K562 (cell line): ENCODE measurements at regions of chr11 and their contacts with region 1.

Region 1: DNA sequence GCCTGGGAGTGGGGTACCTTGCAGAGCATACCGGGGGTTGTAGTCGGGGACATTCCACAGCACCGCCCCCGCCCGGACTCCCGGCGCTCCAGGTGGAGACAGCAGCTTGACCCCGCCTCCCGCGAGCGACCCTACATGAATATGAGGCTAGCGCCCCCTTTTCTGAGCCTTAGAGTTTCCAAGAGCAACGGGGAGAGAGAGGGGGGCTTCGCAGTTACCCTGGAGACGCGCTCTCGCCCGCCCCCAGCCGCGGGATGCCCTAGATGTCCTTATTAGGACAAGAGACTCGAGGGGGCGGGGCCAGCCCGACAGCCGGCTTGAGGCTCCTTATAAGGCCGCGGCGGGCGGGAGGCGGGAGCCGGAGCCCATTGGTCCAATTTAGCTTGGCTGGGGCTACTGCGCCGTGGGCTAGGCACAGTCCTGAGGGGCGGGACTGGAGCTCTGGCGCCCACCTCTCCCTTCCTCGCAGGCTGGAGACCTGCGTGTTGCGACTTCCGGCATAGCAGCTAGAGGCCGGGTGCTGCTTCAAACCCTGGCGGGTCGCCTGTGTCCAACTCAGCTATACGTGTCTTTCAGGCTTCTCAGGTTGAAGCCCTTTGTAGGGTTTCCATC is 927 bp upstream of the MUS81 start:
- DNase-seq: peak; percentile 82 to 100 (median 89)
- ATAC-seq: peak; percentile 80
- H3K4me3 ChIP-seq: peak overlapping the region; percentile 95
- H3K27ac ChIP-seq: peak overlapping the region; percentile 96
- H3K4me1 ChIP-seq: peaks cover 14 to 73% of the 10 kb centered on the region in 2 experiments
- H3K27me3 ChIP-seq: no peaks in the 10 kb centered on the region; a peak in 1 of 5 replicates
- CTCF ChIP-seq: peak; percentile 12 to 31 (median 19); a peak in 3 of 6 replicates
- EP300 ChIP-seq: 0 out of 2 replicates have a peak, but pooled peaks have one; percentile 10
- POLR2A ChIP-seq: peak; percentile 98
- RAD21 ChIP-seq: no peak

Region 2: DNA sequence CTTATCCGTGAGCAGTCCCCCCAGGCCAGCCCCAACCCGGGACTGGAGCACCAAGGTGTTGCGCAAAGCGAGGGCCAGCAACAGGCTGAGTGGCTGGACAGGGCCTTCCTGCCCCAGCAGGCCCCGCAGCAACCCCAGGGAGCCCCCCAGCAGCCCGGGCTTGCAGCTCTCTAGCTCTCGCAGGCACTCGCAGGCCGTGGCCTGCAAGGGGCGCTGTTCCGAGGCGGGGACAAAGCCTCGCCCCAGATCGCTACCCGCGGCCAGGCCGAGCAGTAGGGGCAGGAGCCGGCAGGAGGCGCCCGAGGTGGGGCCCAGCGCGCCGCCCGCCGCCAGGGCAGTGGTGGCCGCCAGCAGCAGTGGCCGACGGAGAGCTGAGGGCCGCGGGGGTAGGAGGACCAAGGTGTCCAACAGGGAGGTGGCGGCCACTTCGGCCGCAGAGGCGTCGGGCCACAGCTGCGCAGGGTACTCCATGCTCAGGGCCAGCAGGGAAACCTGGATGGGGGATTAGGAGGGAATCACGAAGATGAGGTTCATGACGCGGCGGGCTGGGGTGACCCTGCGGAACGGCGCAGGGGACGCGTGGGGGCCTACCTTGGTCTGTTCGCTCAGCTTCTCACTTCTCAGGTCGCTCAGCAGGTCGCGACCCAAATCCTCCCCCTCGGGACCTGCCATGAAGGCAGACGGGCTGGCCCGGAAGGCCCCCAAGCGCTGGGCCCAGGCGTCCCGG is 79.3 kb before region 1 on chr11:
- CTCF ChIA-PET with region 1: no interaction called
- POLR2A ChIA-PET with region 1: interaction called, 18 read pairs
- in situ Hi-C with region 1: no loop called
- intact Hi-C with region 1: no loop called
- DNase-seq: peak; percentile 84 to 92 (median 87)
- ATAC-seq: peak; percentile 92
- H3K4me3 ChIP-seq: peak overlapping the region; percentile 86
- H3K27ac ChIP-seq: peak overlapping the region; percentile 95
- H3K4me1 ChIP-seq: peaks cover 7 to 48% of the 10 kb centered on the region in 2 experiments; a peak in 4 of 5 replicates
- H3K27me3 ChIP-seq: no peaks in the 10 kb centered on the region
- CTCF ChIP-seq: peak; percentile 96 to 100 (median 99)
- EP300 ChIP-seq: no peak
- POLR2A ChIP-seq: peak; percentile 85
- RAD21 ChIP-seq: peak; percentile 86 to 90

Region 3: GRCh38 chr11:65796726-65797601 is 62.3 kb before region 1 on chr11:
- CTCF ChIA-PET with region 1: no interaction called
- POLR2A ChIA-PET with region 1: no interaction called
- in situ Hi-C with region 1: no loop called
- intact Hi-C with region 1: no loop called
- DNase-seq: no peak
- ATAC-seq: peak; percentile 47; the same call in 2 of the 3 replicates
- H3K4me3 ChIP-seq: no peak overlapping the region
- H3K27ac ChIP-seq: no peak overlapping the region
- H3K4me1 ChIP-seq: peaks cover 0 to 36% of the 10 kb centered on the region in 2 experiments; a peak in 1 of 5 replicates
- H3K27me3 ChIP-seq: peaks cover 77 to 92% of the 10 kb centered on the region in 2 experiments
- CTCF ChIP-seq: no peak
- EP300 ChIP-seq: no peak
- POLR2A ChIP-seq: no peak
- RAD21 ChIP-seq: no peak

Region 4: GRCh38 chr11:65833297-65834030 is 25.8 kb before region 1 on chr11 and contains the start of gene SNX32:
- CTCF ChIA-PET with region 1: no interaction called
- POLR2A ChIA-PET with region 1: interaction called, 12 read pairs
- in situ Hi-C with region 1: no loop called
- intact Hi-C with region 1: no loop called
- DNase-seq: peak; percentile 83 to 96 (median 94)
- ATAC-seq: peak; percentile 100
- H3K4me3 ChIP-seq: no peak within 1 kb of the TSS
- H3K27ac ChIP-seq: no peak within 1 kb of the TSS
- H3K4me1 ChIP-seq: peaks cover 0 to 16% of the 10 kb centered on the region in 2 experiments; a peak in 2 of 5 replicates
- H3K27me3 ChIP-seq: peaks cover 4 to 24% of the 10 kb centered on the region in 2 experiments; a peak in 4 of 5 replicates
- CTCF ChIP-seq: no peak
- EP300 ChIP-seq: no peak
- POLR2A ChIP-seq: no peak
- RAD21 ChIP-seq: no peak
- polyA plus RNA-seq, gene SNX32: 0.03 TPM

Region 5: DNA sequence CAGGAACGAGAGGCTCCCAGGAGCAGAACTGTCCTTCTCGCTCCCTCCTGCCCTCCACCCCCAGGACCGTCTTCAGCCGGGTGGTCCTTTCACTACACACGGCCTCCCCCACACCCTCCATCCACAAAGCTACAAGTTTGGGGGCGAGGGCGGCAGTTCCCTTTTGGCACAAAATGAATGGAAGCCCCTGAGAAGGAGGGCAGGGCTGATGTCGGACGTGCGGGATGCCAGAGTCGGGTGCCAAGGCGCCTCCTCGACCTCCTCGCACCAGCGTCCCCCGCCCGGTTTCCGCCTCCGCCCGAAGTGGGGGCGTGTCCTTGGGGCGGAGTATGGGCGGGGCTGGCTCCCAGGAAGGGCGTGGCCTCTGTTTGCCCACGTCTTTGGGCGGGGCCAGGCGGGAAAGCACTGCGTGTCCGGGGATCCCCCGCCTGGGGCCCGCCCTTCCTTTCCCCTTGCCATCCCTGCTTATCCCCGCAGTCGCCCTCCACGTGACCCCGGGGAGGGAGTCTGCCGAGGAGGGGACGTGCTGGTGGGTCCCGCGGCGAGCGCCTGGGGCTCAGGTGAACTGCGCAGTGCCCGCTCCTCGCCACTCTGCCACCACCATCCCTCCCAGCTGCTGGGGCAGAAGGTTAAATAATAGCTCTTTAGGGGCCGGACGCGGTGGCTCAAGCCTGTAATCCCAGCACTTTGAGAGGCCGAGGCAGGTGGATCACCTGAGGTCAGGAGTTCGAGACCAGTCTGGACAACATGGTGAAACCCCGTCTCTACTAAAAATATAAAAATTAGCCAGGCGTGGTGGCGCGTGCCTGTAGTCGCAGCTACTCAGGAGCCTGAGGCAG is 14.2 kb after region 1 on chr11:
- CTCF ChIA-PET with region 1: no interaction called
- POLR2A ChIA-PET with region 1: interaction called, 151 read pairs
- in situ Hi-C with region 1: no loop called
- intact Hi-C with region 1: no loop called
- DNase-seq: peak; percentile 92 to 98 (median 97)
- ATAC-seq: peak; percentile 86
- H3K4me3 ChIP-seq: peak overlapping the region; percentile 46
- H3K27ac ChIP-seq: peak overlapping the region; percentile 73
- H3K4me1 ChIP-seq: peaks cover 11 to 42% of the 10 kb centered on the region in 2 experiments
- H3K27me3 ChIP-seq: no peaks in the 10 kb centered on the region
- CTCF ChIP-seq: no peak
- EP300 ChIP-seq: no peak
- POLR2A ChIP-seq: peak; percentile 79
- RAD21 ChIP-seq: no peak

Region 6: DNA sequence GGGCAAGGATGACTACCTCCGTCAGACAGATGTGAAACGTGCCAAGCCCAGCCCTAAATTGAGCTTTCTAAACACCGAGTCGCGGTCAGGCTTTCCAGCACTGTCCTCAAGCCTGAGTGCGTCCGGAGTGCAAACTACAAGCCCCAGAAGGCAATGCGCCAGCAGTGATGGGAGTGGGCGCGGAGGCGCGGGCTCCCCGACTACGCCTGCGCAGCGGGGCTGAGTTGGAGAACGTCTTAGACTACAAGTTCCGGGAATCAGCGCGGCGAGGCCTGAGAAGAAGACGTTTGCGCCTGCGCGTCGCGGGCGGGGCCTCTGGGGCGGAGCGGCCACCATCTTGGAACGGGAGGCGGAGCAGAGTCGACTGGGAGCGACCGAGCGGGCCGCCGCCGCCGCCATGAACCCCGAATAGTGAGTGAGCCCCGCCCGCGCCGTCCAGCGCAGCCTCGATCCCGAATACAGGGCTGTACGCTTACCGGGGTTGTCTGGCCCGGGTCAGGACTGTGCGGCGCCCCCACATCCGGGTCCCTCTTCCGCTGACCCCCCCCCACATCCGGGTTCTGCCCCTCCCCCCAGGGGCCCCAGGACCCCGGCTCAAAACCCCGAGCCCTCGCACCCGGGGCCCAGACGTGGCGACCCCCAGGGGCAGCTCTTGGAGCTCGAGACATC is 409.1 kb after region 1 on chr11 and contains the start of gene RAB1B:
- CTCF ChIA-PET with region 1: no interaction called
- POLR2A ChIA-PET with region 1: no interaction called
- in situ Hi-C with region 1: no loop called
- intact Hi-C with region 1: no loop called
- DNase-seq: peak; percentile 91 to 100 (median 96)
- ATAC-seq: peak; percentile 92
- H3K4me3 ChIP-seq: peak within 1 kb of the TSS; percentile 100
- H3K27ac ChIP-seq: peak within 1 kb of the TSS; percentile 95
- H3K4me1 ChIP-seq: peaks cover 5 to 47% of the 10 kb centered on the region in 2 experiments; a peak in 4 of 5 replicates
- H3K27me3 ChIP-seq: no peaks in the 10 kb centered on the region
- CTCF ChIP-seq: no peak
- EP300 ChIP-seq: no peak
- POLR2A ChIP-seq: peak; percentile 82; the same call in 1 of the 2 replicates
- RAD21 ChIP-seq: no peak
- polyA plus RNA-seq, gene RAB1B: 5.6 to 16.0 TPM

Region 7: GRCh38 chr11:66408488-66409214 is 549.3 kb after region 1 on chr11:
- CTCF ChIA-PET with region 1: no interaction called
- POLR2A ChIA-PET with region 1: no interaction called
- in situ Hi-C with region 1: no loop called
- intact Hi-C with region 1: no loop called
- DNase-seq: peak; percentile 90 to 93 (median 92)
- ATAC-seq: peak; percentile 93
- H3K4me3 ChIP-seq: no peak overlapping the region
- H3K27ac ChIP-seq: no peak overlapping the region
- H3K4me1 ChIP-seq: peaks cover 7 to 9% of the 10 kb centered on the region in 2 experiments; a peak in 2 of 5 replicates
- H3K27me3 ChIP-seq: peaks cover 55 to 70% of the 10 kb centered on the region in 2 experiments
- CTCF ChIP-seq: peak; percentile 99 to 100 (median 99)
- EP300 ChIP-seq: peak; percentile 31; the same call in 1 of the 2 replicates
- POLR2A ChIP-seq: no peak
- RAD21 ChIP-seq: peak; percentile 100